Ascending aorta (tissue), 2 donors: ENCODE measurements at regions of chr5 and their contacts with region 1.

Region 1: DNA sequence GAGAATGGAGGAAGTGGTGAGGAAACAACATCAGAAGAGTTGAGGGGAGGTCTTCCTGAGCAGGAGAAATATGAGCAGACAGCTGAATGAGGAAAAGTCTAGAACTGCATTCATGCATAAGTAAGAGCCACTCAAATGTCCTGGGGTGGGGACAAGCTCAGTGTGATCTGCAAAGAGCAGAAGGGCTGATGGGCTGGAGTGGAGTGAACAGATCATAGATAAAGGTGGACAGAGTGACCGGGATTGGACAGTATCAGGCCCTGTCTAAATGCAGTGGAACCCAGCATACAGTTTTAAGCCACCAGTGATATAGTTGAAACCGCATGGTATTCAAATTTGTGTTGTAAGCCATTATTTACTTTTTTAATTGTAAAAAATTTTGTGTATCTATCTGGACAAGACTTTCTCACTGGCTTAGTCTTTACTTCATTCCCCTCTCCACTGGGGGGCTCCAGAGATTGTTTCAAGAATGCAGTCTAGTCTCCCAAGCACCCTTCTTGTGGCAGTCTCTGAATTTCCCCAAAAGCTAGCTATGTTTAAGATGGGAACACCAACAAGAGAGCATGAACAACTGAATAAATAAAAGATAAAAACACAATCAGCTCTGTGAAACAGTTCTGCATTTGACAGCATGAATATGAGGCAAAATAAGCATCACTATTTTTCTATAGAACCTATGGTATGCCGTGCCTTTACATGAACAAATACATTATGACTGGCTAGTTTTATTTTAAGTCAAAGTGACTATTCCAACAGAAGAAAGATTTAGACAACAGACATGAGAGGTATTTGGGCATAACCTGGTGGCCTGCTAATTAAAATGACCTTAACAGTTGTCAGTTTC is 10.7 kb upstream of the STK32A start:
- DNase-seq: no peak
- H3K4me3 ChIP-seq: no peak overlapping the region
- H3K27ac ChIP-seq: no peak overlapping the region
- H3K4me1 ChIP-seq: no peaks in the 10 kb centered on the region
- H3K27me3 ChIP-seq: no peaks in the 10 kb centered on the region
- CTCF ChIP-seq: peak; percentile 68 to 83 (median 74)

Region 2: DNA sequence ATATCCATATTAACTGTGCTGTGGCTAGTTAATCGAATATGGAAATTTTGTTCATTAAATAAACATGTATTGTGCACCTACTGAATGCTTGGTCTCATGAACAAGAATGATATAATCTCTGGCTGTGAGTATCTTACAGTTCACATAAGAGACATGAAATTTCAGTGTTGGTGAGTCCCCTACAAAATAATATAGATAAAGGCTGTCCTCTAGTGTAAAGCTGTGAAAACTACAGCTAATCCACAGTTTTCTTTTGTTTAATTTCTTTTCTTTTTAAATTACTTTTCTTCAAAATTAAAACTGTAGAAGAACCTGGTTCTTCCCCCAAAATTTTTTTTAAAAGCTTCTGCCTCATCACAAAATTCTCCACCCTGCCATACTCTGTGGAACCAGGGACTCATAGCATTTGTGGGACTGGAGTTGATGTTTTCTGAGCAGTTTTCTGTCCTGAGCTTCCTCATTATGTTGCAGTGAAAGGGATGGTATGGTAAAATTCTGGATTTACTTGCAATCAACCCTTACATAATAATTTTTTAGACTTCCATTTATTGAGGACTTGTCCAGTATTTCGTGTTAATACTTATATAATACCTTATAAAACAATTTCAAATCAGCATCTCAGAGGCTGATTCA is 145.7 kb after region 1 on chr5:
- intact Hi-C with region 1: loop called (anchors 1 kb)
- DNase-seq: no peak
- H3K4me3 ChIP-seq: peak overlapping the region in 1 of 2 donors; percentile 38
- H3K27ac ChIP-seq: peak overlapping the region; percentile 38 to 49
- H3K4me1 ChIP-seq: no peaks in the 10 kb centered on the region
- H3K27me3 ChIP-seq: no peaks in the 10 kb centered on the region
- CTCF ChIP-seq: peak; percentile 50 to 82 (median 74)